ENCODE measurements at regions of chr18 and their contacts with region 1.

Region 1: DNA sequence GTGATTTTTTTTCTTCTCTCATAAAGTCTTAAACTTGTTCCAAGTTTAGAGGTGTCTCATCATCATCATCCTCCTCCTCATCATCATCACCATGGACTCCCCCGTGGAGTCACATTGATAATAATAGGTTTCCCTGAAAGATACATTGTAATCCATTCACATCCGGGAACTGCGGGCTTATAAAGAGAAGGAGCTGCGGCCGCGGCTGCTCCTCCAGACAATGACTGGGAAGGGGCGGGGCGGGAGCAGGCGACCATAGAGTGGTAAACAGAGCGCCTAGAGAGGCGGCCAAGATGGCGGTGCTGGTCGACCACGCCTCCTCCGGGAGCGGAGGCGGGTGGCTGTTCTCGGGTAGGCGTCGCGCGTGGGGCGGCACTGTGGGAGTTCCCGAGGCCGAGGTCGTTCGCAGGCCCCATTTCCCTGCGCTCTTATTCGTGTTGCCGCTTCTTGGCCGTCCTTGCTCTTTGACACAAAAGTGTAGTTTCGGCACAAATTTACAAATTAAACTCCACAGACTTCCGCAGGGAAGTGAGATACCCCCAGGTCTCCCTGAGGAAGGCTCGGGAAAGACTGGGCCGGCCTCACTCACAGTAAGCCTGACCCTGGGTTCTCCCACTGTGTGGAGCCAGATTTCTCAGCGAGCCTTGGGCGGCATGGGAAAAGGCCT is 1.8 kb upstream of the TCF4 start:
- DNase-seq: peak; percentile 89
- H3K4me3 ChIP-seq: peak overlapping the region; percentile 90
- H3K27ac ChIP-seq: peak overlapping the region; percentile 93
- H3K4me1 ChIP-seq: peaks cover 15% of the 10 kb centered on the region
- CTCF ChIP-seq: no peak

Region 2: DNA sequence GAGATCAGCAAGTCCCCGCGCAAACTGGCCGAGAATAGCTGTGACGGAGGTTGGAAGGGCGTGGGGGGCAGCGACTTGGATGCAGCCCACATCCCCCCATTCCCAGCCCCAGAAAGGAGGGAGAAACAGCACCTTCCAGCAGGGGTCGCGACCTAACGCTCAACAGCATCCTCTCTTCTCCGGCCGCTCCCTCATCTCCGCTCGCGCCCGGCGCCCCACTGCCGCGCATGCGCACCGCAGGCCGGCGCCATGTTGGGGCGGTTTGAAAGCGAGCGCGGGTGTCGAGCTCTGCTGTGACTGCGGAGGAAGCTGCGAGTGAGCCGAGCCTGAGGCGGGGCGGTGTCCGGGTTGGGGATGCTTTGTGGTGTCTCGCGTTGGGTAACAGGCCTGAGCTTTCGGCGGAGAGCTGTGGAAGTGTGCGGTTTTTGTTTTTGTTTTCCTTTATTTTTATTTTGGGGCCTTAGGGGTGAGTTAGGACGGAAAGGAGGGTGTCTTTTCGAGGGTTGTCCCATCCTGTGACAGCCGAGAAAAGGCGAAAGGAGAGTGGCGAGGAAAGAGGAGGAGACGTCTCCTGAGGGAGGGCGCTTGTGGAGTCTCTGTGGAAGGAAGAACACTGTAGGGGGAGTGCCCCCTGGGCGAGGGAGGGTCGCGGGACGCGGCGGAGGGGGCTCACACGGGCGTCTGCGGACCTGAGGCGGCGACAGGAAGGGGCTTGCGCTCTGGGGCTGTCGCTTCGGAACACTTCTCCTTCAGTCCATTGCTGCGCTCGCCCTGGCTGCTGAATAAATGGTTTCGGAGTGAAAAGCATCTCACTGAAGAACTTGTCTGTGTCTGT is 1231.9 kb before region 1 on chr18 and contains the starts of genes C18orf54 and STARD6:
- CTCF ChIA-PET with region 1: no interaction called
- POLR2A ChIA-PET with region 1: no interaction called
- intact Hi-C with region 1: loop called (anchors 10 kb)
- DNase-seq: peak; percentile 88
- H3K4me3 ChIP-seq: peak within 1 kb of the TSS; percentile 88
- H3K27ac ChIP-seq: peak within 1 kb of the TSS; percentile 82
- H3K4me1 ChIP-seq: peaks cover 21% of the 10 kb centered on the region
- CTCF ChIP-seq: peak; percentile 65
- total RNA-seq, gene C18orf54: 4.9 and 5.4 TPM in 2 replicates
- total RNA-seq, gene STARD6: not detected in 2 replicates

Region 3: GRCh38 chr18:55322178-55322735 is 267.5 kb before region 1 on chr18:
- CTCF ChIA-PET with region 1: no interaction called
- POLR2A ChIA-PET with region 1: interaction called, 3 read pairs
- intact Hi-C with region 1: loop called (anchors 5 kb)
- DNase-seq: peak; percentile 70
- H3K4me3 ChIP-seq: peak overlapping the region; percentile 73
- H3K27ac ChIP-seq: peak overlapping the region; percentile 61
- H3K4me1 ChIP-seq: peaks cover 58% of the 10 kb centered on the region
- CTCF ChIP-seq: peak; percentile 26; the same call in 1 of the 2 replicates

Region 4: DNA sequence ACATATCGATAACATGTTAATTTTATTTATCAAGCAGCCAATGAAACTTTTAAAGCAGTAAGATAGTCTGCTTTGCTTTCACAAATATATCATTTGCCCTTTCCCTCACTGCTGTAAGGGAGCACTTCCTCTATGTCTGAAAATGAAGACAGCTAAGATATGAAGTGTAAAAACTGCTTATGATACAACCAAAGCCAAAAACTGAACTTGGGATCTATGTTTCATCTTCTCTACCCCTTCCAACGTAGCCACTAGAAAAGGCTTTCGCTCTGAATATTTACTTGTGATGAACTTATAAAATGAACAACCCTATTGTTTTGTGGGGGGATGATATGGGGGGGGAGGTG is 142.1 kb before region 1 on chr18:
- CTCF ChIA-PET with region 1: no interaction called
- POLR2A ChIA-PET with region 1: interaction called, 5 read pairs
- intact Hi-C with region 1: loop called (anchors 2 kb)
- DNase-seq: peak; percentile 30
- H3K4me3 ChIP-seq: peak overlapping the region; percentile 40
- H3K27ac ChIP-seq: peak overlapping the region; percentile 98
- H3K4me1 ChIP-seq: peaks cover 91% of the 10 kb centered on the region
- CTCF ChIP-seq: no peak

Region 5: GRCh38 chr18:55509631-55510324 is 80.0 kb before region 1 on chr18:
- CTCF ChIA-PET with region 1: no interaction called
- POLR2A ChIA-PET with region 1: interaction called, 4 read pairs
- intact Hi-C with region 1: loop called (anchors 5 kb)
- DNase-seq: peak; percentile 53
- H3K4me3 ChIP-seq: peak overlapping the region; percentile 63
- H3K27ac ChIP-seq: peak overlapping the region; percentile 81
- H3K4me1 ChIP-seq: peaks cover 69% of the 10 kb centered on the region
- CTCF ChIP-seq: no peak

Measured in OCI-LY7 (cell line).